AG04450 (cell line): ENCODE measurements at regions of chr1 and their contacts with region 1.

Region 1: GRCh38 chr1:244599937-244600350 is 53.0 kb upstream of the DESI2 start:
- DNase-seq: peak; percentile 89
- H3K4me3 ChIP-seq: peak overlapping the region; percentile 55
- H3K27ac ChIP-seq: peak overlapping the region; percentile 94
- H3K27me3 ChIP-seq: no peaks in the 10 kb centered on the region
- CTCF ChIP-seq: no peak

Region 2: DNA sequence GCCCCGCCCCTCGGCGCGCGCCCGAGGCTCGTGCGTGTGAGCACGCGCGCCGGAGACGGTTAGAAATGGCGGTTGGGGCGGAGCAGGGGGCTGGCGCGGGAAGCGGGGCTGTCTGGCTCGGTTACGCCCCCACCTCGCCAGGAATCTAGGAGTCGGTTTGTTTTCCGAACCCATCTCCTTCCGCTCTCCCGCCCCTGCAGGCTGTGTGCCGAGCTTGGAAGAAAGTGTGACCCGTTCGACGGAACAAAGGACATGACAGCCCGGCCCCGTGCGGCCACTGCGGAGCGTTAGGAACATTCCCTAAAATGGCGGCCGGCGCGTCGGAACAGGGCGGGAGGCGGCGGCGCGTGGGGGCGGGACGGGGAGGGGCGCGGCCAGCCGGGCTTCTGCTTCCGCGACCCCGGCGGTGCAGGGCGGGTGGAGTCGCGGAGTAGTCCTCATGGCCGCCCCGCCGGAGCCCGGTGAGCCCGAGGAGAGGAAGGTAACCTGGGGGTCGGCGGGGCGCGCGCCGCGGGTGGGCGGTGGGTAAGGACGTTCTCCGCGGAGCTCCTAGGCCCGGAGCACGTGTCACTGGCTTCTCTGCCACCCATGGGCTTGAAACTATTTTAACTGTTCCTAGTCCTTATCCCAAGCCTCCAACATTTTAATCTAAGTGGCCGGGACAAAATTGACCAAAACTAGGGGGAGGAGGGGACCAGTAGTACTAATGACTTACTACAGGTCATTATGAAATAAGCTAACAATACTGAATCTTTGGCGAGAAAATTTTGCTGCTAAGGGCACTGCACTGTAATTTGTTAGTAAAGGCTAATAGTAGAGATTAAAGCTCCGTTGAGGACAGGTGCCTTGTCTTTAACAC is 235.6 kb after region 1 on chr1 and contains the start of gene COX20:
- CTCF ChIA-PET with region 1: interaction called, 11 read pairs
- POLR2A ChIA-PET with region 1: interaction called, 3 read pairs
- DNase-seq: peak; percentile 72
- H3K4me3 ChIP-seq: peak within 1 kb of the TSS; percentile 65
- H3K27ac ChIP-seq: peak within 1 kb of the TSS; percentile 99
- H3K27me3 ChIP-seq: no peaks in the 10 kb centered on the region
- CTCF ChIP-seq: no peak
- polyA plus RNA-seq, gene COX20: 25.4 and 45.8 TPM in 2 replicates

Region 3: GRCh38 chr1:244918421-244919319 is 318.7 kb after region 1 on chr1:
- CTCF ChIA-PET with region 1: no interaction called
- POLR2A ChIA-PET with region 1: no interaction called
- DNase-seq: no peak
- H3K4me3 ChIP-seq: peak overlapping the region; percentile 69
- H3K27ac ChIP-seq: no peak overlapping the region
- H3K27me3 ChIP-seq: peaks cover 3% of the 10 kb centered on the region
- CTCF ChIP-seq: no peak